Sciatic nerve (tissue), 2 donors: ENCODE measurements at regions of chr5 and their contacts with region 1.

Region 1: DNA sequence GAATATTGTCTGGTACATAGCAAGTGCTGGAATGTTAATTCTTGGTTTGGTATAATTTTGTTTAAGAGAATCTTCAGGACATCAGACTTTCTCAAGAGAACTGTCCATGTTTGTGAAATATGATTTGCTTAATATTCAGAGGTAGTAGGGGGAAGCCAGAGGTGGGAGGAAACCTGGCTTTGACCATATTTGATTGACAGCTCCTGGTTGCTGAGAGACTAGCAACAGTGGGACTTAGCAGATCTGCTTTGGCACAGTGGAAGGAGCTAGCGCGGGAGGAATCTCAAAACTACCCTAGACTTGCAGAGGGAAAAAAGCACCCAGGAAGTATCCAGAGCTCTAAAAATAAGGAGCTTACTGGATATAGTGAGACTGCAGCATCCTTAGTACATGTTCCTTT is 72.5 kb downstream of the MAST4 start:
- DNase-seq: no peak
- ATAC-seq: no peak

Region 2: GRCh38 chr5:66713998-66714397 is 45.3 kb after region 1 on chr5:
- intact Hi-C with region 1: loop called (anchors 1 kb)
- DNase-seq: no peak
- ATAC-seq: no peak